Endothelial cell of umbilical vein (primary cell): ENCODE measurements at regions of chr16 and their contacts with region 1.

Region 1: DNA sequence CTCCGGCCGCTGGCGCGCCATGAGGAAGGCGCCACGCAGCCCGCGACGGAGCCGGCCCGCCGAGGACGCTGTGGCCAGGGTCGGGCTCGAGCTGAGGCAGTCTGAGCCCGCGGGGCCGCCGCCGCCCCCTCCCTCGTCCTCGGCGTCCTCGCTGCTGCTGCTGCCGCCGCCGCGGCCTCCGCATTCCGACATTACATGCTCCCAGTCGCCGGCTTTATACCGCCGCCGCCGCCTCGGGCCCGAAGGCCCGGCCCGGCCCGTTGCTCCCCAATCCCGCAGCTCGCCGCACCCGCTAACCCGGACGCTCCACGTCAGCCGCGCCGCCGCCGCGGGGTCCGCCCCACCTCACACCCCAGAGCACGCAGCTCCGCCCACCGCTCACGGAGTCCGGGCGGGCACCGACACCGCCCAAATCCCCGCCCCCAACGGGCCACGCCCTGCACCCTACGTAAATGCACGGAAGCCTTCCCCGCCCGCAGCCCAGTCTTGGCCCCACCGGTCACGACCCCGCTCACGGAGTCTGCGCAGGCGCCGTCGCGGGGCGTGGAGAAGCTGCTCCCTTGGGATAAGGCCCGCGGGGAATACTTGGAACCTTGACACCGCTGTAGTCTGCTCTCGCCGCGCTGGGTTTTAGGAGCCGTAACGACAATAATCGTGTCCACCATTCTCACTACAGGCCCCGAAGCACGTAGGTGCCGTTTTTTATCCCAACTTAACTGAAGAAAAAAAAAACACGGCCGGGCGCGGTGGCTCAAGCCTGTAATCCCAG is at the start of gene TXNDC11:
- DNase-seq: peak; percentile 99
- H3K4me3 ChIP-seq: peak within 1 kb of the TSS; percentile 91 to 93 (median 91)
- H3K27ac ChIP-seq: peak within 1 kb of the TSS; percentile 85
- H3K4me1 ChIP-seq: peaks cover 22% of the 10 kb centered on the region
- H3K27me3 ChIP-seq: no peaks in the 10 kb centered on the region
- CTCF ChIP-seq: no peak
- POLR2A ChIP-seq: peak; percentile 84
- total RNA-seq, gene TXNDC11: 37.1 and 42.5 TPM in 2 replicates

Region 2: DNA sequence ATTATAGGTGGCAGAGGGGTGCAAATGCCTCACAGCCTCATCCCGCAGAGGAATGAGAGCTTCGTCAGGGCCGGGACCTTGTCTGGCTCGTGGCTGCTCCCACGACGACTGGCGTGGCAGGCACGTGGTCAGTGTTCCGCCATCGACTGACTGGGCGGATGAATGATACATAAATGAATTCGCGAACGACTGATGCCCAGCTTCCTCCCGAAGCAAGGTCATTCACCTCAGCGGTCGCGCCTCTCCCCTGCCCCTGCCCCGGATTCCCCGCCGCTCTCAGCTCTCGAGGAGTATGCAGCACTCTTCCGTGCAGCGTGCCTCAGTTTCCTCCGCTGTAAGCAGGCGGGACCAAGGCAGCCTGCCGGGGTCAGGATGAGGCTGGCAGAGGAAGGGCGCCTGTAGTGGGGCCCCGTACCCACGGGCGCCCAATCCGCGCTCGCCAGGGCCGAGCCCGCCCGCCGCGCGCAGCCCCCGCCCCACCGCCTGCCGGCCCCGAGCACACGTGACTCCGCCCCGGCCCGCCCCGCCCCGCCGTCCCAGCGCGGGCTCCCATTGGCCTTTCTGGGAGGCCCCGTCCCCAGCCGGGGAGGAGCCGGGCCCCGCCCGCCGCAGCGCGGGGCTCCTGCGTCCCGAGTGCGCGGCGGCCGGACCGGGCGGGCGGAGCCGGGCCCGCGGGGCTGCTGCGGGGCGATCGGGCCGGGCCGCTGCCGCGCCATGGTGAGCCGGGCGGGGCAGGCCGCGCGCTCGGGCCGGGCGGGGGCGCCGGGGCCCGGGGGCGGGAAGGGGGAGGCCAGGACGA is 74.7 kb before region 1 on chr16 and contains the start of gene SNN:
- CTCF ChIA-PET with region 1: no interaction called
- POLR2A ChIA-PET with region 1: no interaction called
- dilution Hi-C with region 1: no loop called
- intact Hi-C with region 1: loop called (anchors 2 kb)
- DNase-seq: peak; percentile 79
- H3K4me3 ChIP-seq: peak within 1 kb of the TSS; percentile 33 to 72 (median 42)
- H3K27ac ChIP-seq: no peak within 1 kb of the TSS
- H3K4me1 ChIP-seq: peaks cover 13% of the 10 kb centered on the region
- H3K27me3 ChIP-seq: no peaks in the 10 kb centered on the region
- CTCF ChIP-seq: no peak
- POLR2A ChIP-seq: peak; percentile 41
- total RNA-seq, gene SNN: 20.7 and 24.1 TPM in 2 replicates

Region 3: DNA sequence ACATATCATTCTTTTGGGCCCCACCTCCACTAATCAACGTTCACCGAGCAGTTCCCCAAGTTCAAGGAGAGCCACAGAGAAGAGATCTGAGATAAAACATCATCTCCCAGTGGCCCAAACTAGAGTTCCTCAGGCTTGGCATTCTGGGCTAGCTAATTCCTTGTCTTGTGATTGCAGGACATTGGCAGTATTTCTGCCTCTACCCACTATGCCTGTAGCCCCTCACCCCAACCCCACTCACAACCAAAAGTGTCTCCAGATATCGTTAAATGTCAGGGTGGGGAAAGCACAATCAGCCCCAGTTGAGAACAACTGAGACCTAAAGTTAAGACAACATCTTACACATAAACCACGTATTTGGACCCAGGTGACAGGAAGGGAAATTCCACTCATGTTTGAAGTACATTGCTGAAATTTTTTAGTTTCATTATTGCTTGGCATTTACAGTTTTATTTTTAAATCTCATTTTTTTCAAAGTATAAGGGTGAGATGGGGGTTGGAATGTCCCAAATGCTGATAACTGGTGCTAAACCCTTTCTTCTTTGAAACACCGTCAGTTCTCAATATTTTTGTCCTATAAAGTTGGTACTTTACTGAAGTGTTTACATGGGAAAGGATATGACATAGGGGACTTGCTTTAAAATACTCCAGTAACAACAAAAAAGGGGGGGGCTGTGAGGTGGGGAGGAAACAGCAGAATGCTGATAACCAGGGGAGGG is 40.8 kb after region 1 on chr16:
- CTCF ChIA-PET with region 1: interaction called, 4 read pairs
- POLR2A ChIA-PET with region 1: no interaction called
- dilution Hi-C with region 1: no loop called
- intact Hi-C with region 1: loop called (anchors 2 kb)
- DNase-seq: peak; percentile 88
- H3K4me3 ChIP-seq: peak overlapping the region in 2 of 3 experiments; percentile 16 to 67
- H3K27ac ChIP-seq: peak overlapping the region; percentile 94
- H3K4me1 ChIP-seq: peaks cover 29% of the 10 kb centered on the region
- H3K27me3 ChIP-seq: no peaks in the 10 kb centered on the region
- CTCF ChIP-seq: no peak
- POLR2A ChIP-seq: no peak

Region 4: GRCh38 chr16:11797166-11797956 is 54.6 kb after region 1 on chr16 and contains the start of gene ZC3H7A:
- CTCF ChIA-PET with region 1: interaction called, 11 read pairs
- POLR2A ChIA-PET with region 1: interaction called, 5 read pairs
- dilution Hi-C with region 1: no loop called
- intact Hi-C with region 1: loop called (anchors 1 kb)
- DNase-seq: peak; percentile 98
- H3K4me3 ChIP-seq: peak within 1 kb of the TSS; percentile 82 to 93 (median 93)
- H3K27ac ChIP-seq: peak within 1 kb of the TSS; percentile 87
- H3K4me1 ChIP-seq: peaks cover 32% of the 10 kb centered on the region
- H3K27me3 ChIP-seq: no peaks in the 10 kb centered on the region
- CTCF ChIP-seq: peak; percentile 49 to 88
- POLR2A ChIP-seq: peak; percentile 98
- total RNA-seq, gene ZC3H7A: 73.9 and 78.0 TPM in 2 replicates

Region 5: GRCh38 chr16:11851294-11852091 is 108.8 kb after region 1 on chr16 and contains the start of gene RSL1D1:
- CTCF ChIA-PET with region 1: no interaction called
- POLR2A ChIA-PET with region 1: no interaction called
- dilution Hi-C with region 1: no loop called
- intact Hi-C with region 1: loop called (anchors 2 kb)
- DNase-seq: peak; percentile 98
- H3K4me3 ChIP-seq: peak within 1 kb of the TSS; percentile 51 to 95 (median 72)
- H3K27ac ChIP-seq: peak within 1 kb of the TSS; percentile 47
- H3K4me1 ChIP-seq: peaks cover 11% of the 10 kb centered on the region
- H3K27me3 ChIP-seq: no peaks in the 10 kb centered on the region
- CTCF ChIP-seq: no peak
- POLR2A ChIP-seq: peak; percentile 98
- total RNA-seq, gene RSL1D1: 127 and 132 TPM in 2 replicates

Region 6: GRCh38 chr16:11977376-11978041 is 234.8 kb after region 1 on chr16:
- CTCF ChIA-PET with region 1: no interaction called
- POLR2A ChIA-PET with region 1: no interaction called
- dilution Hi-C with region 1: no loop called
- intact Hi-C with region 1: loop called (anchors 5 kb)
- DNase-seq: peak; percentile 12
- H3K4me3 ChIP-seq: peak overlapping the region; percentile 72 to 97 (median 74)
- H3K27ac ChIP-seq: no peak overlapping the region
- H3K4me1 ChIP-seq: peaks cover 14% of the 10 kb centered on the region
- H3K27me3 ChIP-seq: no peaks in the 10 kb centered on the region
- CTCF ChIP-seq: no peak
- POLR2A ChIP-seq: no peak